GM12878 (cell line): ENCODE measurements at regions of chr9 and their contacts with region 1.

Region 1: GRCh38 chr9:109972026-109972882 is 192.3 kb downstream of the PALM2AKAP2 start:
- DNase-seq: peak; percentile 91
- ATAC-seq: peak; percentile 44
- H3K4me3 ChIP-seq: no peak overlapping the region
- H3K27ac ChIP-seq: peak overlapping the region; percentile 92
- H3K4me1 ChIP-seq: peaks cover 87% of the 10 kb centered on the region
- H3K27me3 ChIP-seq: no peaks in the 10 kb centered on the region
- CTCF ChIP-seq: peak; percentile 22 to 53 (median 42); a peak in 5 of 6 replicates
- EP300 ChIP-seq: no peak
- POLR2A ChIP-seq: peak; percentile 42
- RAD21 ChIP-seq: peak; percentile 41; the same call in 1 of the 2 replicates

Region 2: GRCh38 chr9:109918339-109919163 is 53.7 kb before region 1 on chr9:
- CTCF ChIA-PET with region 1: interaction called, 19 read pairs
- POLR2A ChIA-PET with region 1: interaction called, 52 read pairs
- RAD21 ChIA-PET with region 1: interaction called, 59 read pairs
- SMC1A ChIA-PET with region 1: interaction called, 423 read pairs
- in situ Hi-C with region 1: loop called (anchors 5 kb)
- intact Hi-C with region 1: loop called (anchors 1 kb)
- DNase-seq: peak; percentile 80
- ATAC-seq: peak; percentile 73
- H3K4me3 ChIP-seq: peak overlapping the region; percentile 37; the same call in 1 of the 2 replicates
- H3K27ac ChIP-seq: peak overlapping the region; percentile 94
- H3K4me1 ChIP-seq: peaks cover 55% of the 10 kb centered on the region
- H3K27me3 ChIP-seq: no peaks in the 10 kb centered on the region
- CTCF ChIP-seq: no peak
- EP300 ChIP-seq: peak; percentile 71 to 92
- POLR2A ChIP-seq: no peak; the same call in none of the 2 replicates
- RAD21 ChIP-seq: peak; percentile 38; the same call in 1 of the 2 replicates

Region 3: DNA sequence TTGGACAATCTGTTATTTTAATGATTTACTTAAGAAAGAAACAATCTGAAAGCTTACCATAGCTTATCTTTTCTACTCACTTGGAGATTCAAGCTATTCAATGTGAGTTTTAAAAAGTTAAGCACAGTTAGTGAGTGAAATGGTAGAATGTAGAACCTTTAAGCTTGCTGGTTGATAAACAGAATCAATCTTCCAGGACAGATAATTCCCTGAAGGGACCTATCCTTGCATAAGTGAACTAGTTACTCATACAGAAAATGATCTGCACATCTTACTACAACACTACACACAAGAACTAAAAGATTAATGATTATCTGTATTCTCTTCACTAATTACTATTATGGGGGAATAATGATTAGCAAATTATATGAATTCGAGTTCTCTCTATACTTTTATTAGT is 26.7 kb before region 1 on chr9:
- CTCF ChIA-PET with region 1: interaction called, 18 read pairs
- POLR2A ChIA-PET with region 1: no interaction called
- RAD21 ChIA-PET with region 1: interaction called, 26 read pairs
- SMC1A ChIA-PET with region 1: interaction called, 12 read pairs
- in situ Hi-C with region 1: no loop called
- intact Hi-C with region 1: no loop called
- DNase-seq: no peak
- ATAC-seq: no peak
- H3K4me3 ChIP-seq: no peak overlapping the region
- H3K27ac ChIP-seq: no peak overlapping the region
- H3K4me1 ChIP-seq: peaks cover 7% of the 10 kb centered on the region
- H3K27me3 ChIP-seq: no peaks in the 10 kb centered on the region
- CTCF ChIP-seq: no peak
- EP300 ChIP-seq: no peak
- POLR2A ChIP-seq: no peak
- RAD21 ChIP-seq: no peak

Region 4: GRCh38 chr9:110021891-110022290 is 49.6 kb after region 1 on chr9:
- CTCF ChIA-PET with region 1: interaction called, 4 read pairs
- POLR2A ChIA-PET with region 1: interaction called, 7 read pairs
- RAD21 ChIA-PET with region 1: interaction called, 10 read pairs
- SMC1A ChIA-PET with region 1: interaction called, 13 read pairs
- in situ Hi-C with region 1: no loop called
- intact Hi-C with region 1: no loop called
- DNase-seq: peak; percentile 60
- ATAC-seq: peak; percentile 99
- H3K4me3 ChIP-seq: no peak overlapping the region
- H3K27ac ChIP-seq: peak overlapping the region; percentile 4; the same call in 1 of the 2 replicates
- H3K4me1 ChIP-seq: peaks cover 8% of the 10 kb centered on the region
- H3K27me3 ChIP-seq: no peaks in the 10 kb centered on the region
- CTCF ChIP-seq: no peak
- EP300 ChIP-seq: no peak
- POLR2A ChIP-seq: no peak
- RAD21 ChIP-seq: no peak

Region 5: DNA sequence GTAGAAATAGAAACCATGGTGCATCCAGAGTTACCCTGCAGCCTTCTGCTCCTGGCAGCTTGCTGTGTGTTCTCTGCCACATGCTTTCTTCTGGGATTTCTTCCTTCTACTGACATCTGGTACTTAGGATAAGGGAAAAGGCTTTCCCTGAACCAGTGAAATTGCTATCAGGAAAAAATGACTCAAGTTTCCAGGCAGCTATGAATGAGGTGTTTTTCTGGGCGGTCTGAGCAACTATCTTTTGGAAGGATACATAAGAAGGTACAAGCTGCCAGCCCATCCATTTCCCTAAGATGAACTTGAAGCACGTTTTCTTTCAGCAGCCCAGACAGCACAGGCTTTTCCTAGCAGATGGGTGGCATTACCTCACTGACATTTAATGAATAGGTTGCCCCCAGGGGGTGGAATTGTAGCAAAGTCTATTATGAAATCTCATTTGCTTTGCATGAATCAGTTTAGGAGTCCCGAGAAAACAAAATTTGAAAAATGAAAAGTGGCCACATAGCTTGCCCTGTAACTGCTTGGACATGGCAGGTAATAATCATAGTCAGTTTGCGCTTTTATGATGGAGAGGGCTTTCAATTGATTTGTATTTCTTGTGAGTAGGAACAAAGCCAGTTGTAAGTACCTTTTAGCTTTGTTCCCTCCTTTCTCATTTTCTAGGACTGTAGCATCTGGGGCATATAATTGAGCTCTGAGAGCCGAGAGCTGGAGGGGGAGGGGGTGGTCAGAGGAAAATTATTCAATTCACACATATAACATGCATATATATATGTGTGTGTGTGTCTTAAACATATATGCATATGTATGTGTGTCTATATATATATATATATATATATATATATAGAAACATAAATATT is 127.2 kb after region 1 on chr9:
- CTCF ChIA-PET with region 1: interaction called, 5 read pairs
- POLR2A ChIA-PET with region 1: interaction called, 19 read pairs
- RAD21 ChIA-PET with region 1: interaction called, 9 read pairs
- SMC1A ChIA-PET with region 1: interaction called, 14 read pairs
- in situ Hi-C with region 1: no loop called
- intact Hi-C with region 1: no loop called
- DNase-seq: no peak
- ATAC-seq: no peak
- H3K4me3 ChIP-seq: no peak overlapping the region
- H3K27ac ChIP-seq: no peak overlapping the region
- H3K4me1 ChIP-seq: peaks cover 42% of the 10 kb centered on the region
- H3K27me3 ChIP-seq: no peaks in the 10 kb centered on the region
- CTCF ChIP-seq: no peak
- EP300 ChIP-seq: no peak
- POLR2A ChIP-seq: no peak
- RAD21 ChIP-seq: no peak

Region 6: DNA sequence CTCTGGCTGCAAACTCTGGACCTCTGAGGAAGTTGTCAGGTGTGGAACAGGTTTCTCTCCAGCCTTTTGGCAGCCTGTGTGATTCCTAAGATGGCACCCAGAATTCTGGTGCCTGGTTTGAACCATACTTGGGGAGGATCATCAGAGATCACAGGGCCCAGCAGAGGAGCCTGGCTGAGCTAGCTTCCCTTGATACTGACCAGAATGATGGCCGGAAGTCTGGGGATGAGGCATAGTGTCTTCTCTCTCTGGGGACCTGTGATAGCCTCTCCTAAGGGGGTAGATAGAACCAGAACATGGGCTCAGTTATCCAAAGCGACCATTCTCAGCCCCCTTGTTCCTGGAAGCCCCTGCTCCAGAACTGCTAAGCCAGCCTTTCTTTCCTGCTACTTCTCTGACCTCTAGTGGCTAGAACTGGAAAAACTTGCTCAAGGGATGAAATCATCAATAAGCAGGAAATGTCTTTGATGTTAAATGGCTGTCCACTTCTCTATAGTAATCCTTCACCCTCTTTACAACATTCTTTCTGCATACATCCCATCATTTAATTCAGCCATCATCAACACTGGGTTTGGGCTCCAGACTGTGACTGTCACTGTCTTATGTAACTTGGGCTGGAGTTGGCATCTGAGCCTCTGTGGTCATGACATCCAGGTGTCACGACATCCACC is 180.6 kb after region 1 on chr9:
- CTCF ChIA-PET with region 1: interaction called, 60 read pairs
- POLR2A ChIA-PET with region 1: interaction called, 24 read pairs
- RAD21 ChIA-PET with region 1: interaction called, 92 read pairs
- SMC1A ChIA-PET with region 1: interaction called, 254 read pairs
- in situ Hi-C with region 1: loop called (anchors 5 kb)
- intact Hi-C with region 1: loop called (anchors 2 kb)
- DNase-seq: no peak
- ATAC-seq: peak; percentile 23
- H3K4me3 ChIP-seq: 0 out of 2 replicates have a peak overlapping the region, but pooled peaks have one; percentile 17
- H3K27ac ChIP-seq: no peak overlapping the region
- H3K4me1 ChIP-seq: peaks cover 57% of the 10 kb centered on the region
- H3K27me3 ChIP-seq: no peaks in the 10 kb centered on the region
- CTCF ChIP-seq: peak; percentile 68 to 83 (median 78); a peak in 5 of 6 replicates
- EP300 ChIP-seq: no peak
- POLR2A ChIP-seq: no peak; the same call in none of the 2 replicates
- RAD21 ChIP-seq: peak; percentile 96